ENCODE measurements at regions of chr1 and their contacts with region 1.

Region 1: DNA sequence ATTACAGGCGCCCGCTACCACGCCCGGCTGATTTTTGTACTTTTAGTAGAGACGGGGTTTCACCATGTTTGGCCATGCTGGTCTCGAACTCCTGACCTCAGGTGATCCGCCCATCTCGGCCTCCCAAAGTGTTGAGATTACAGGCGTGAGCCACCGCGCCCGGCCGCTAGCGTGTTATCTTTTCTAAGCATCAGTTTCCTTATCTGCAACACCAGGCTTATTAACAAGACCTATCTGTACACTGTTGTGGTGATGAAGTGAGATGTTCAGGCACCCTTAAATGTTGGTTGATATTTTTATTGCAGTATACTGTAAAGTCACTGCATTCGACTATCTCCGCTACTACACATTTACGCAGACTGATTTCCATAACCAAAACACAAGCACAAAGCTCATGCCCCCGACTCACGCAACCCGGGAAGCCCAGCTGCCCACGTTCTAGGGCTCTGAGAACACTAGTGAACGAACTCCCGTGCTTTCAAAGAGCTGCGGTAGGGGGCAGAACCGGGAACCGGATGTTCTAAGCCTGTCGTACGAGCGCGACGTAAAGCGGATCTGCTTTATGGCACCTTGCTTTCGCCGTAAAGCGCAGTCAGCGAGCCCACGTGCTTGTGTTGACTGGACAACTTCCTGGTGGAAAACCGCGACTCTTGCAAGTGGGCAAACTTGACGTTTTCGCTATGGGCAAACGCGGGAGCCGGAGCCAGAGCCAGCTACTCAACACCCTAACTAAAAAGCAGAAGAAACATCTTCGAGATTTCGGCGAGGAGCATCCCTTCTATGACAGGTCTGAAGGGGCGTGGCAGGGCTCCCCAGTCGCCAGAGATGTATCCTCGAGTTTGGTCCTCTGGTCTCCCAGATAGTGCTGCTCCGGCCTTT is at the start of gene UTP25:
- DNase-seq: peak; percentile 91 to 94 (median 93)
- H3K4me3 ChIP-seq: peak within 1 kb of the TSS; percentile 90 to 94
- H3K4me3 Mint-ChIP-seq: peak within 1 kb of the TSS; percentile 88 to 98 (median 96)
- H3K27ac ChIP-seq: peak within 1 kb of the TSS; percentile 73
- H3K27ac Mint-ChIP-seq: peak within 1 kb of the TSS; percentile 90 to 97 (median 92)
- H3K4me1 ChIP-seq: peaks cover 18% of the 10 kb centered on the region
- H3K4me1 Mint-ChIP-seq: peaks cover 24 to 46% (median 32%) of the 10 kb centered on the region in 4 donors
- H3K27me3 ChIP-seq: no peaks in the 10 kb centered on the region
- H3K27me3 Mint-ChIP-seq: peaks cover 5% of the 10 kb centered on the region in 2 donors
- total RNA-seq, gene UTP25: 13.4 to 13.6 TPM

Region 2: GRCh38 chr1:209601809-209602657 is 225.6 kb before region 1 on chr1:
- CTCF ChIA-PET with region 1: interaction called, 5 read pairs
- POLR2A ChIA-PET with region 1: no interaction called
- intact Hi-C with region 1: loop called (anchors 1 kb)
- DNase-seq: peak in 4 of 5 donors; percentile 18 to 35 (median 30)
- H3K4me3 ChIP-seq: no peak overlapping the region
- H3K4me3 Mint-ChIP-seq: no peak overlapping the region
- H3K27ac ChIP-seq: no peak overlapping the region
- H3K27ac Mint-ChIP-seq: no peak overlapping the region
- H3K4me1 ChIP-seq: no peaks in the 10 kb centered on the region
- H3K4me1 Mint-ChIP-seq: peaks cover 0 to 2% (median under 1%) of the 10 kb centered on the region in 4 donors
- H3K27me3 ChIP-seq: no peaks in the 10 kb centered on the region
- H3K27me3 Mint-ChIP-seq: peaks cover 1 to 9% of the 10 kb centered on the region in 2 donors

Region 3: GRCh38 chr1:209723756-209724693 is 103.6 kb before region 1 on chr1:
- CTCF ChIA-PET with region 1: no interaction called
- POLR2A ChIA-PET with region 1: no interaction called
- intact Hi-C with region 1: no loop called
- DNase-seq: peak in 1 of 5 donors; percentile 5
- H3K4me3 ChIP-seq: no peak overlapping the region
- H3K4me3 Mint-ChIP-seq: peak overlapping the region in 4 of 8 donors; percentile 21 to 72 (median 44)
- H3K27ac ChIP-seq: no peak overlapping the region
- H3K27ac Mint-ChIP-seq: peak overlapping the region in 5 of 7 donors; percentile 36 to 91 (median 88)
- H3K4me1 ChIP-seq: peaks cover 19% of the 10 kb centered on the region
- H3K4me1 Mint-ChIP-seq: peaks cover 11 to 22% (median 14%) of the 10 kb centered on the region in 4 donors
- H3K27me3 ChIP-seq: no peaks in the 10 kb centered on the region
- H3K27me3 Mint-ChIP-seq: no peaks in the 10 kb centered on the region

Region 4: GRCh38 chr1:209755926-209756614 is 71.6 kb before region 1 on chr1 and contains the start of gene TRAF3IP3:
- CTCF ChIA-PET with region 1: interaction called, 18 read pairs
- POLR2A ChIA-PET with region 1: interaction called, 9 read pairs
- intact Hi-C with region 1: loop called (anchors 1 kb)
- DNase-seq: peak; percentile 78 to 89 (median 83)
- H3K4me3 ChIP-seq: peak within 1 kb of the TSS; percentile 72 to 81
- H3K4me3 Mint-ChIP-seq: peak within 1 kb of the TSS; percentile 91 to 100 (median 98)
- H3K27ac ChIP-seq: peak within 1 kb of the TSS; percentile 72
- H3K27ac Mint-ChIP-seq: peak within 1 kb of the TSS; percentile 87 to 96 (median 94)
- H3K4me1 ChIP-seq: peaks cover 82% of the 10 kb centered on the region
- H3K4me1 Mint-ChIP-seq: peaks cover 53 to 95% (median 71%) of the 10 kb centered on the region in 4 donors
- H3K27me3 ChIP-seq: no peaks in the 10 kb centered on the region
- H3K27me3 Mint-ChIP-seq: no peaks in the 10 kb centered on the region
- total RNA-seq, gene TRAF3IP3: 571 to 574 TPM

Region 5: DNA sequence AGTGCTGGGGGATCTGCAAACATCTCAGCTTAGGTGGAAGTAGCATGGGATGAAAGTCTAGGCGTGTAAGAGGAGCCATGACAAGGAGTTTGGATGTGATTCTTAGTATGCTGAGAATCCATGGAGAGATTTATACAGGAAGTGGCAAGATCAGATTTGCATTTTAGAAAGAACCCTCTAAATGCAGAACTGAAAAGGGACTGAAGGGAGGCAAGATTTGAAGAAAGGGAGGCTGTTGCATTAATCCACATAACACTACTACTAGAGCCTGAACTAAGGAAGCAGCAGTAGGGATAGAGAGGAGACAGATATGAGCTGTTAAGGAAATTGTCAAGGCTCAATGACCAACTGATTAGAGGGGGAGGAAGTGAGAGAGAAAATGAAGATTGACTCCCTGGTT is 53.0 kb before region 1 on chr1:
- CTCF ChIA-PET with region 1: interaction called, 17 read pairs
- POLR2A ChIA-PET with region 1: interaction called, 15 read pairs
- intact Hi-C with region 1: no loop called
- DNase-seq: no peak
- H3K4me3 ChIP-seq: no peak overlapping the region
- H3K4me3 Mint-ChIP-seq: peak overlapping the region in 2 of 8 donors; percentile 7 to 61
- H3K27ac ChIP-seq: no peak overlapping the region
- H3K27ac Mint-ChIP-seq: peak overlapping the region in 5 of 7 donors; percentile 43 to 88 (median 72)
- H3K4me1 ChIP-seq: peaks cover 71% of the 10 kb centered on the region
- H3K4me1 Mint-ChIP-seq: peaks cover 18 to 28% (median 19%) of the 10 kb centered on the region in 4 donors
- H3K27me3 ChIP-seq: no peaks in the 10 kb centered on the region
- H3K27me3 Mint-ChIP-seq: no peaks in the 10 kb centered on the region

Region 6: GRCh38 chr1:209805875-209806760 is 21.5 kb before region 1 on chr1 and contains the start of gene IRF6:
- CTCF ChIA-PET with region 1: interaction called, 46 read pairs
- POLR2A ChIA-PET with region 1: interaction called, 4 read pairs
- intact Hi-C with region 1: loop called (anchors 2 kb)
- DNase-seq: peak; percentile 60 to 71 (median 69)
- H3K4me3 ChIP-seq: peak within 1 kb of the TSS in 1 of 2 donors; percentile 59
- H3K4me3 Mint-ChIP-seq: peak within 1 kb of the TSS; percentile 91 to 97 (median 92)
- H3K27ac ChIP-seq: no peak within 1 kb of the TSS
- H3K27ac Mint-ChIP-seq: peak within 1 kb of the TSS; percentile 75 to 94 (median 91)
- H3K4me1 ChIP-seq: peaks cover 12% of the 10 kb centered on the region
- H3K4me1 Mint-ChIP-seq: peaks cover 6 to 13% (median 10%) of the 10 kb centered on the region in 4 donors
- H3K27me3 ChIP-seq: no peaks in the 10 kb centered on the region
- H3K27me3 Mint-ChIP-seq: peaks cover 0 to 5% of the 10 kb centered on the region in 2 donors
- total RNA-seq, gene IRF6: 0.15 to 0.50 TPM

Region 7: GRCh38 chr1:209850342-209850979 is 22.8 kb after region 1 on chr1:
- CTCF ChIA-PET with region 1: interaction called, 14 read pairs
- POLR2A ChIA-PET with region 1: interaction called, 5 read pairs
- intact Hi-C with region 1: no loop called
- DNase-seq: no peak
- H3K4me3 ChIP-seq: no peak overlapping the region
- H3K4me3 Mint-ChIP-seq: no peak overlapping the region
- H3K27ac ChIP-seq: no peak overlapping the region
- H3K27ac Mint-ChIP-seq: peak overlapping the region in 4 of 7 donors; percentile 8 to 55 (median 30)
- H3K4me1 ChIP-seq: no peaks in the 10 kb centered on the region
- H3K4me1 Mint-ChIP-seq: peaks cover 0 to 6% (median 5%) of the 10 kb centered on the region in 4 donors
- H3K27me3 ChIP-seq: no peaks in the 10 kb centered on the region
- H3K27me3 Mint-ChIP-seq: no peaks in the 10 kb centered on the region

Measured in CD4-positive, alpha-beta memory T cell (primary cell).